IMR-90 (cell line): ENCODE measurements at regions of chr12 and their contacts with region 1.

Region 1: GRCh38 chr12:23337213-23337612 is 612.3 kb downstream of the SOX5 start:
- DNase-seq: no peak
- ATAC-seq: no peak
- H3K4me3 ChIP-seq: no peak overlapping the region
- H3K27ac ChIP-seq: no peak overlapping the region
- H3K4me1 ChIP-seq: no peaks in the 10 kb centered on the region
- H3K27me3 ChIP-seq: no peaks in the 10 kb centered on the region
- CTCF ChIP-seq: no peak
- POLR2A ChIP-seq: no peak
- RAD21 ChIP-seq: no peak

Region 2: GRCh38 chr12:23277831-23278230 is 59.4 kb before region 1 on chr12:
- CTCF ChIA-PET with region 1: no interaction called
- POLR2A ChIA-PET with region 1: no interaction called
- dilution Hi-C with region 1: no loop called
- in situ Hi-C with region 1: loop called (anchors 10 kb)
- intact Hi-C with region 1: no loop called
- DNase-seq: no peak
- ATAC-seq: no peak
- H3K4me3 ChIP-seq: no peak overlapping the region
- H3K27ac ChIP-seq: no peak overlapping the region
- H3K4me1 ChIP-seq: no peaks in the 10 kb centered on the region
- H3K27me3 ChIP-seq: no peaks in the 10 kb centered on the region
- CTCF ChIP-seq: no peak
- POLR2A ChIP-seq: no peak
- RAD21 ChIP-seq: no peak

Region 3: GRCh38 chr12:23431006-23431405 is 93.8 kb after region 1 on chr12:
- CTCF ChIA-PET with region 1: no interaction called
- POLR2A ChIA-PET with region 1: no interaction called
- dilution Hi-C with region 1: no loop called
- in situ Hi-C with region 1: no loop called
- intact Hi-C with region 1: no loop called
- DNase-seq: no peak
- ATAC-seq: no peak
- H3K4me3 ChIP-seq: no peak overlapping the region
- H3K27ac ChIP-seq: no peak overlapping the region
- H3K4me1 ChIP-seq: no peaks in the 10 kb centered on the region
- H3K27me3 ChIP-seq: no peaks in the 10 kb centered on the region
- CTCF ChIP-seq: no peak
- POLR2A ChIP-seq: no peak
- RAD21 ChIP-seq: no peak